Activated B cell treated with CpG ODN at 0.5 μM for 24 hours (primary cell): ENCODE measurements at regions of chr1 and their contacts with region 1.

Region 1: DNA sequence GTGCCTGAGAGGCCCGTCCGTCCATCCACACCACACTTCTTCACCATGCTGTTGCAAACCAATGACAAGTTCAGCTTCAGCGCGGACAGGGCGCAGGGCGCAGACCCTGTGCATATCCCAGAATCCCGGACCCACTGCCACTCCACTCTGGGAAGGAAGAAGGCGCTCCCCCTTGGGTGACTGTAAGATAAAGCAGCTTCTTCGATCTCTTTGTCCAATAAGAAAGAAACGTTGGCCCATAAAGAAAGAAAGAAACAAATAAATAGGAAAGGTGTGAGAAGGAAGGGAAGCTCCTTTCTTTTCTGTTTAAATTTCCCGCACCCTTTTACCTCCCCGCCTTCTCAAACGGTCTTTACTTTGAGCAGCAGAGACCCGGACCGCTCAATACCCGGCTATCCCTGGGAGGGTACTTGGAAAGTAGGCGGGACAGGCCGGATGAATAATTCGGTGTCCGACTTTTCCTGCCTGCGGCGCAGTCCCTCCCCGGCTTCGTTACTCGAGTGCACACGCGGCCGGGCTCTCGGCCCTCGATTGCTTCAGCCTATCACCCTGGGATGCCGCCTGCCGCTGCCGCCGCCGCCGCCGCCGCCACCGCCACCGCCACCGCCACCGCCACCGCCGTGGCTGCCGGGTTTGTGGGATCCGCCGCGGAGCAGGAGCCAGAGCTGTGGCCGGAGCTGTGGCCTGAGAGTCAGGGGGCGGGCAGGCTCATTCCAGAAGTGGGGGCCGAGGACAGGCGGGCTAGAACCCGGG is 523 bp upstream of the RASAL2 start:
- DNase-seq: peak; percentile 54
- ATAC-seq: peak; percentile 87
- H3K4me3 Mint-ChIP-seq: peak overlapping the region; percentile 83
- H3K27ac Mint-ChIP-seq: no peak overlapping the region
- H3K4me1 Mint-ChIP-seq: peaks cover 16% of the 10 kb centered on the region
- H3K27me3 Mint-ChIP-seq: peaks cover 70% of the 10 kb centered on the region
- CTCF ChIP-seq: no peak

Region 2: DNA sequence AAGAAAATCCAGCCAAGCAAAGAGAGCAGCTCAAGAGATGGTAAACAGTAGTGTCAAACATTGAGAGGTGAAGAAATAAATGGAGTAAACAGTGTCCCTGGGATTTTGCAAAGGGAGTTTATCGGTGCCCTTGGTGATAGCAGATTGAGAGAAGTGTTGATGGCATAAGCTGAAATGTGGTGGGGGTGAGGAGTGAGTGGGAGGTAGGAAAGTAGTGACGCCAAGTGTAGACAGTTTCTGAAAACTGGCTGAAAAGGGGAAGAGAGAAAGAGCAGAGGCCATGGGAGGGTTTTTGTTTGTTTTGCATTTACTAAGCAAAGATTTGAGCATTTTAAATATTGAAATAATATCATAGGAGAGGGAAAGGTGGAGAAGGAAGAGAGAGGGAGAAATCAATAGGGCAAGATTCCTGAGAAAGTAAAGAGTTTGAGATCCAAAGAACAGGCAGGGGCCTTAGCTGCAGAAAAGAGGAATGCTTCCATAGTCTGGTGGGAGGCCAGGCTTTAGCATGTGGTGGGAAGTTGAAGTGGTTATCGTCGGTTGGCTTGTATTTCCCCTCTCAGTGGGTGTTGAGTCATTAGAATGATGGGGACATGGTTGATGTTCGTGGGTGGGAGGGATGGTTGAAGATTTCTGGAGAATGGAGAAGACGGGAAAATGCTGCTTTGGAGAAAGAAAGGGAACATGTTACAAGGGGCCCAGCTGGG is 26.3 kb before region 1 on chr1:
- CTCF ChIA-PET with region 1: no interaction called
- POLR2A ChIA-PET with region 1: interaction called, 3 read pairs
- intact Hi-C with region 1: loop called (anchors 1 kb)
- DNase-seq: no peak
- ATAC-seq: peak; percentile 66
- H3K4me3 Mint-ChIP-seq: no peak overlapping the region
- H3K27ac Mint-ChIP-seq: peak overlapping the region; percentile 13
- H3K4me1 Mint-ChIP-seq: peaks cover 11% of the 10 kb centered on the region
- H3K27me3 Mint-ChIP-seq: peaks cover 2% of the 10 kb centered on the region
- CTCF ChIP-seq: no peak